ENCODE measurements at regions of chr13 and their contacts with region 1.

Region 1: GRCh38 chr13:73715114-73715910 is 418.9 kb downstream of the KLF12 start:
- DNase-seq: peak; percentile 68
- ATAC-seq: peak; percentile 85
- H3K4me3 Mint-ChIP-seq: peak overlapping the region; percentile 50
- H3K27ac Mint-ChIP-seq: peak overlapping the region; percentile 83
- H3K4me1 Mint-ChIP-seq: peaks cover 53% of the 10 kb centered on the region
- H3K27me3 Mint-ChIP-seq: no peaks in the 10 kb centered on the region

Region 2: GRCh38 chr13:73228546-73228945 is 486.8 kb before region 1 on chr13:
- CTCF ChIA-PET with region 1: no interaction called
- POLR2A ChIA-PET with region 1: no interaction called
- intact Hi-C with region 1: loop called in 1 of 2 experiments (anchors 5 kb)
- DNase-seq: peak; percentile 35
- ATAC-seq: peak; percentile 83
- H3K4me3 Mint-ChIP-seq: no peak overlapping the region
- H3K27ac Mint-ChIP-seq: no peak overlapping the region
- H3K4me1 Mint-ChIP-seq: peaks cover 46% of the 10 kb centered on the region
- H3K27me3 Mint-ChIP-seq: peaks cover 3% of the 10 kb centered on the region

Region 3: GRCh38 chr13:73702419-73703071 is 12.8 kb before region 1 on chr13:
- CTCF ChIA-PET with region 1: interaction called, 12 read pairs
- POLR2A ChIA-PET with region 1: interaction called, 10 read pairs
- intact Hi-C with region 1: loop called (anchors 1 to 2 kb)
- DNase-seq: peak; percentile 58
- ATAC-seq: peak; percentile 98
- H3K4me3 Mint-ChIP-seq: peak overlapping the region; percentile 57
- H3K27ac Mint-ChIP-seq: peak overlapping the region; percentile 74
- H3K4me1 Mint-ChIP-seq: peaks cover 39% of the 10 kb centered on the region
- H3K27me3 Mint-ChIP-seq: no peaks in the 10 kb centered on the region

Region 4: DNA sequence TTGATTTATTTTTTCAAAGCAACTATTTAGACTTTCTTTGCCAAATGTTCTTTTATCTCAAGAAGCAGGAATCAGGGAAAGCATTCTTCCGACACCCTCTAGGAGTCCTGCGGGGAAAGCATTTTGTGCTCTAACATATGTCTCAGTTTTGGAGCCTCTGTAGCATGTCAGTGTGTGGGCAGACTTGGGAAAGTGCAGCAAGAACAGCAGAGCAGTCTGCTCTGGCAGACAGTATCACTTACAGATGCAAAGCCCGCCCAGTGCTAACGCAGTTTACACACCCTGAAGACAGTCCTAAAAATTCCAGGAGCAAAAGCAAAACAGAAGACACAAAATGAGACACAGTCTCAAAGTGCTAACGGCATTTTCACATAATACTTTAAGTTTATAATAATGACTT is 25.4 kb after region 1 on chr13:
- CTCF ChIA-PET with region 1: no interaction called
- POLR2A ChIA-PET with region 1: no interaction called
- intact Hi-C with region 1: no loop called
- DNase-seq: no peak
- ATAC-seq: no peak
- H3K4me3 Mint-ChIP-seq: peak overlapping the region; percentile 35
- H3K27ac Mint-ChIP-seq: no peak overlapping the region
- H3K4me1 Mint-ChIP-seq: peaks cover 39% of the 10 kb centered on the region
- H3K27me3 Mint-ChIP-seq: no peaks in the 10 kb centered on the region

Region 5: GRCh38 chr13:74062933-74063332 is 347.6 kb after region 1 on chr13:
- CTCF ChIA-PET with region 1: no interaction called
- POLR2A ChIA-PET with region 1: no interaction called
- intact Hi-C with region 1: loop called in 1 of 2 experiments (anchors 5 kb)
- DNase-seq: peak; percentile 60
- ATAC-seq: peak; percentile 67
- H3K4me3 Mint-ChIP-seq: peak overlapping the region; percentile 64
- H3K27ac Mint-ChIP-seq: peak overlapping the region; percentile 92
- H3K4me1 Mint-ChIP-seq: peaks cover 82% of the 10 kb centered on the region
- H3K27me3 Mint-ChIP-seq: no peaks in the 10 kb centered on the region

Region 6: DNA sequence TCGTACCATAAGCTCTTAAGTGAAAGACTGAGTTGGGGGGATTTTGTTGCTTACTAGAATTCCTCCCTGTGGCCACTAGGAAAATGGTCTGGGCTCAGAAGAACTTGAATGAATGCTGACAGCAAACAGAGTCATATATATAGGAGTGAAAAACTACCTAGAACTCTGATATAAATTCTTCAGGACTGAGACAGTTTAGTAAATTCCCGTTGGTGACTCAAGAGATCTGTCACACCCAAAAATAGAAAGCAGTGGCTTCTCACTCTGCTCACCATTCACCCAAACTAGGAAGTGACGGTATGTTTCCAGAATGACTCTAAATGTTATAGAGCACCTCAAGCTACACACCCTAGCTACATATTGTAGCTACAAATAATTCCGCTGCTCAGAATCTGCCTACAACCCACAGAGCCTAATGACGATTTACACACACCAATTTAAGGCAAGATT is 1650.4 kb after region 1 on chr13:
- CTCF ChIA-PET with region 1: no interaction called
- POLR2A ChIA-PET with region 1: no interaction called
- intact Hi-C with region 1: loop called in 1 of 2 experiments (anchors 5 kb)
- DNase-seq: peak; percentile 41
- ATAC-seq: peak; percentile 93
- H3K4me3 Mint-ChIP-seq: peak overlapping the region; percentile 24
- H3K27ac Mint-ChIP-seq: peak overlapping the region; percentile 79
- H3K4me1 Mint-ChIP-seq: peaks cover 44% of the 10 kb centered on the region
- H3K27me3 Mint-ChIP-seq: no peaks in the 10 kb centered on the region